ENCODE measurements at regions of chr18 and their contacts with region 1.

Region 1: DNA sequence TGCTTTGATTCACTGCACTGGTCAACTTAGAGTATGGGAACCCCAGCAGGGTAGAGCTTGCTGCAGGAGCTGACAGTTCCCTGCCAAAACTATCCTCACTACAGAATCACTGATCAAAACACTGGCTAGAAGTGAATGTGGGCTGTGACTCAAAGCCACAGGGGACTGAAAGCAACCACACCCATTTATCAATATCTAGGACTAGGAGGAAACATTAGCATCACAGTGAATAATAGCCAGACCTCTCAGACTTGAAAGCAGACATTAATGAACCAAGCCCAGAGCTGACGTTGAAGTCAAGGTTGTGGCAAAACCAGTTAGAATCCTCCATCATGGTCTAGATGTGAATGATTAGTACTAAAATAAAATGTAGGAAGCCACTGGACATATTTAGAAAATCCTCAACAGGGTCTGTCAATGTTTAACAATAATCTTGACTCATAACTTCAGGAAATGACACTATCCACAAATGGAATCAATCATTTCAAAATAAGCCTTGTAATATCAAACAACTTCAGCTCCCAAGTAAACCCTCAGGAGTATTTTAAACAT is 131.4 kb downstream of the CDH20 start:
- DNase-seq: no peak

Region 2: GRCh38 chr18:61581578-61582201 is 117.1 kb after region 1 on chr18:
- CTCF ChIA-PET with region 1: no interaction called
- POLR2A ChIA-PET with region 1: no interaction called
- DNase-seq: peak; percentile 80

Region 3: GRCh38 chr18:61628085-61628484 is 163.5 kb after region 1 on chr18:
- CTCF ChIA-PET with region 1: interaction called, 10 read pairs
- POLR2A ChIA-PET with region 1: no interaction called
- DNase-seq: no peak